ENCODE measurements at regions of chr10 and their contacts with region 1.

Region 1: DNA sequence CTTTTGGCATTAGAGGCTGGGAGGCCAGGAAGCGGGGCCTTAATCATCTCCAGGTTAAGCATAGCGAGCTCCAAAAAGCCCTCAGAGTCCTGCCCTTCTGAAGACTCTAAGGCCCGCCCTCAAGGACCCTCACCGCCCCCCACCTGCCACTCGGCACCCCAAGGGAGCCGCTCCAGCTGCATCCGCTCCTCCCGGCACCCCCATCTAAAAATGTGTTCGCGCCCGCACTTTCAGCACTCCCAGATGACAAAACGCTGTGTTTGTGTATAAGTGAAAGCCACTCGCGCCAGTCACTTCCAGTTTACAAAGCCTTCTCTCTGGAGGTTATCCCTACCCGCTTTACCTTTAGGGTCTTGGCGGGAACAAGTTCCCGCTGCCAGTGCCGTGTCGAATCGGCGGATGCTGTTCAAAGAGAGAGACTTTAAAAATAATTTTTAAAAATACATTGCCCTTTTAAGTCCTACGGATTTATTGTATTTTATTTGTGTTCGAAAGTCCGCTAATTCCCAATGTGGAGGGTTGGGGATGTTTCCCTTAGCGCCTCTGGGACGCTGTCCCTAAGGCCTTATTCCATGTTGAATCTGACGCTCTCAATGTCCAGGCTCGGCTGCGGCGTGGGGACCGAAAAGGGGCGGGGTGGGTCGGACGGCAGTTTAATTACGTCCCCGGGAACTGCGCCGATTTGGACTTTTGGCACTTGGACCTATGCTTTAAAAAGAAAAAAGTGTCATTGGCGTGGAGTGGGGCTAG is at the starts of genes DCLRE1A and NHLRC2:
- DNase-seq: peak; percentile 89
- ATAC-seq: peak; percentile 70
- H3K4me3 ChIP-seq: peak within 1 kb of the TSS; percentile 86 to 98 (median 90)
- H3K4me3 Mint-ChIP-seq: peak within 1 kb of the TSS; percentile 96
- H3K27ac ChIP-seq: peak within 1 kb of the TSS; percentile 86 to 95
- H3K27ac Mint-ChIP-seq: peak within 1 kb of the TSS; percentile 99
- H3K4me1 ChIP-seq: peaks cover 23 to 33% of the 10 kb centered on the region in 2 donors
- H3K4me1 Mint-ChIP-seq: peaks cover 48% of the 10 kb centered on the region
- H3K27me3 ChIP-seq: no peaks in the 10 kb centered on the region
- H3K27me3 Mint-ChIP-seq: no peaks in the 10 kb centered on the region
- CTCF ChIP-seq: no peak
- total RNA-seq, gene DCLRE1A: 1.9 and 2.4 TPM in 2 replicates
- total RNA-seq, gene NHLRC2: 54.1 and 59.8 TPM in 2 replicates

Region 2: GRCh38 chr10:114024876-114025610 is 170.9 kb after region 1 on chr10:
- CTCF ChIA-PET with region 1: no interaction called
- POLR2A ChIA-PET with region 1: no interaction called
- intact Hi-C with region 1: loop called (anchors 1 kb)
- DNase-seq: peak; percentile 78
- ATAC-seq: peak; percentile 80
- H3K4me3 ChIP-seq: peak overlapping the region in 4 of 5 experiments; percentile 2 to 51 (median 42)
- H3K4me3 Mint-ChIP-seq: peak overlapping the region; percentile 80
- H3K27ac ChIP-seq: peak overlapping the region; percentile 3 to 54
- H3K27ac Mint-ChIP-seq: peak overlapping the region; percentile 62
- H3K4me1 ChIP-seq: peaks cover 24 to 26% of the 10 kb centered on the region in 2 donors
- H3K4me1 Mint-ChIP-seq: peaks cover 27% of the 10 kb centered on the region
- H3K27me3 ChIP-seq: no peaks in the 10 kb centered on the region
- H3K27me3 Mint-ChIP-seq: no peaks in the 10 kb centered on the region
- CTCF ChIP-seq: no peak